ENCODE measurements at regions of chr15 and their contacts with region 1.

Region 1: DNA sequence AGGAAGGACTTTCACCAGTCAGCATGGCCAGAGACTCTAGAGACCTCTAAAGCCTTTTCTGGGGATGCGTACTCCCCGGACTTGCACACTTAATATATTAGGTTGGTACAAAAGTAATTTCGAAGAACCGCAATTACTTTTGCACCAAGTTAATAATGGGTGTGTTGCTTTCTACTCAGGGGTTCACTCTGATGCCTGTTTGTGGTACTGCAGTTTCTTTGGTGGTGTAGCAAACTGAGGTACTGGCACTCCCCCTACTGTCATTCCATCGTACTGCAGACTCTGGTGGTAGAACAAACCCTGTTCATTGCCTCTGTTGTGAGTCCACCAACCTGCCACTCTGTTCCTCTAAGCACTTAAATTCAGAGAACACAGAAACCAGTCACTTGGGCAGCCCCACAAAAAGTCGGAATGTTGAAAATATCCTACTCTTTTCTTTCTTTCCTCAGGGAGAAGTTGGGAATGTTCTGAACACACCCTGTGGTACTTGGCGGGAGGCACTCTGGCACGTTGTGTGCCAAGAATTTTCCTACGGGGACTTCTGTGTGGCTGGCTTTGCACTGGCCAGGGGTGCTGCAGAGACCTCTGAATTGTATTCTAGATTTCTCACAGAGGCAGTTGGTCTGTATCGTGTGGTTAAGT is 46.3 kb downstream of the GABRG3 start:
- DNase-seq: peak in 2 of 3 donors; percentile 42 to 66
- ATAC-seq: peak; percentile 68 to 99 (median 96)
- H3K4me3 ChIP-seq: no peak overlapping the region
- H3K27ac ChIP-seq: no peak overlapping the region
- H3K4me1 ChIP-seq: no peaks in the 10 kb centered on the region
- H3K27me3 ChIP-seq: no peaks in the 10 kb centered on the region
- CTCF ChIP-seq: peak; percentile 64 to 86 (median 78)
- POLR2A ChIP-seq: no peak

Region 2: GRCh38 chr15:26891448-26892181 is 125.7 kb before region 1 on chr15:
- intact Hi-C with region 1: loop called in 1 of 2 experiments (anchors 10 kb)
- DNase-seq: peak; percentile 56 to 66 (median 65)
- ATAC-seq: peak; percentile 61 to 76 (median 71)
- H3K4me3 ChIP-seq: no peak overlapping the region
- H3K27ac ChIP-seq: no peak overlapping the region
- H3K4me1 ChIP-seq: peaks cover 0 to 4% (median 0%) of the 10 kb centered on the region in 4 donors
- H3K27me3 ChIP-seq: peaks cover 0 to 8% of the 10 kb centered on the region in 2 donors
- CTCF ChIP-seq: peak; percentile 32 to 65 (median 60)
- POLR2A ChIP-seq: no peak